Activated CD8-positive, alpha-beta T cell treated with anti-CD3 and anti-CD28 coated beads, Interleukin-2, amount 10 ng/mL, durations not matched to agents 7 days and 5 days (primary cell): ENCODE measurements at regions of chr2 and their contacts with region 1.

Region 1: GRCh38 chr2:27123302-27124231 is at the start of gene ABHD1:
- DNase-seq: peak; percentile 51
- ATAC-seq: peak; percentile 92
- H3K4me3 Mint-ChIP-seq: peak within 1 kb of the TSS; percentile 77
- H3K27ac Mint-ChIP-seq: peak within 1 kb of the TSS; percentile 71
- H3K4me1 Mint-ChIP-seq: peaks cover 14% of the 10 kb centered on the region
- H3K27me3 Mint-ChIP-seq: peaks cover 37% of the 10 kb centered on the region
- total RNA-seq, gene ABHD1: 0.23 to 0.45 TPM

Region 2: GRCh38 chr2:27079233-27080139 is 44.1 kb before region 1 on chr2:
- CTCF ChIA-PET with region 1: no interaction called
- POLR2A ChIA-PET with region 1: no interaction called
- DNase-seq: no peak
- ATAC-seq: no peak
- H3K4me3 Mint-ChIP-seq: no peak overlapping the region
- H3K27ac Mint-ChIP-seq: peak overlapping the region; percentile 98
- H3K4me1 Mint-ChIP-seq: peaks cover 61% of the 10 kb centered on the region
- H3K27me3 Mint-ChIP-seq: no peaks in the 10 kb centered on the region

Region 3: DNA sequence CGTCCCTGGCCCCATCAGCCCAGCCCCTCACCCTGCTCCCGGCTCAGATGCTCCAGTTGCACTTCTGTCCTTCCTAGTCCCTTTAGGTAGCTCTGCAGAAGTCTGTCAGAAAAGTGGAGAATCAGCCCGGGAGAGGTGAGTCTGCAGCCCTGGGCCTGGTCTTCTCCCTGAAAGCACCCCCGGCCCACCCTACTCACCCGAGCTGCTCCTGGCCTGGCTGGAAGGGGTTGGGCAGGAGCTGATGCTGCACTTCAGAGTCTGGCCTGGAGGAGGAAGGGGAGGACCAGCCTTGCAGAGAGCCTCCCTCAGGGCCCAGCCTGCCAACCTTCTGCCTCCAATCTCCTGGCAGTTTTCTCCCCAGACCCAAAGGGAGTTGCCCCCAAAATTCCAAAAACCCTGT is 21.2 kb before region 1 on chr2:
- CTCF ChIA-PET with region 1: no interaction called
- POLR2A ChIA-PET with region 1: no interaction called
- DNase-seq: no peak
- ATAC-seq: no peak
- H3K4me3 Mint-ChIP-seq: no peak overlapping the region
- H3K27ac Mint-ChIP-seq: no peak overlapping the region
- H3K4me1 Mint-ChIP-seq: no peaks in the 10 kb centered on the region
- H3K27me3 Mint-ChIP-seq: peaks cover 7% of the 10 kb centered on the region

Region 4: DNA sequence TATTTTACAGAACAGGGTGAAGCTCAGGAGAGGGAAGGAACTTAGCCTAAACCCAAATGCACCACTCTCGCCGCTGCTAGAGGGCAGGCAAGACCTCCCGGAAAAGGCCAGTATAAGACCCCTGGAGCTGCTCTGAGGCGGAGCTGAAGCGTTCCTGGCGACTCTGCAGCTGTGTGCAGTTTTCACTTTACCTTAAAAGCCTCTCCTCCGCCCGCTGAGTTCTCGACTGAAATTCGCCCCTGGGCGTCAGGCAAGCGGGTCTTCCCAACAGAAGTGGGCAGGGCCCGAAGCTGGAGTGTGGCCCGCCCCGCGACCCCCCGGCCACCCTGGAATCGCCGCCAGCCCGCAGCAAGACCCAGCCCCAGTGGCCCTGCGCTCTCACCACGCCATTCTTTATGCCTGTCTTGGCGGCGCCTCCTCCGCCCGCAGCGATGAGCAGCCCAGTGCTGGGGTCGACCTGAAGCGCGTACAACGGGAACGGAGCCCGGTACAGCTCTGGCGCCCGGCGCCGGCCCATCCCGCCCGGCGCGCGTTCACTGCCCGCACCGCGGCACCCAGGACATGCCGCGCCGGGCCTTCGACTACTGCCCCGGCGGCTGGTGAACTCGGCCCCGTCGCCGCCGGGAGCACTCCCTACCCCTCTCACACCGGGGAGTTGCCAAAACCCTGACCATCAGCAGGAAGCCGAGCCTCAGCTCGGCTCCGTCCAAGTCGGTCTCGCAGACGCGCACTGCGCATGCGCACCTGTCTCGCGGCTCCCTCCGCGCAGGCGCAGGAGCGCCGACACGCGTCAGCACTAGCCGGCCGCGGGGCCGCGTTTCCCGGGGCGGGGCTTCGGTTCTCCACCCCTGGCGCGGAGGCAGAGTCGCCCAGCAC is 10.6 kb after region 1 on chr2 and contains the start of gene PREB:
- CTCF ChIA-PET with region 1: interaction called, 26 read pairs
- POLR2A ChIA-PET with region 1: interaction called, 31 read pairs
- DNase-seq: peak; percentile 98
- ATAC-seq: peak; percentile 96
- H3K4me3 Mint-ChIP-seq: peak within 1 kb of the TSS; percentile 94
- H3K27ac Mint-ChIP-seq: peak within 1 kb of the TSS; percentile 97
- H3K4me1 Mint-ChIP-seq: peaks cover 29% of the 10 kb centered on the region
- H3K27me3 Mint-ChIP-seq: no peaks in the 10 kb centered on the region
- total RNA-seq, gene PREB: 66.5 to 72.1 TPM

Region 5: DNA sequence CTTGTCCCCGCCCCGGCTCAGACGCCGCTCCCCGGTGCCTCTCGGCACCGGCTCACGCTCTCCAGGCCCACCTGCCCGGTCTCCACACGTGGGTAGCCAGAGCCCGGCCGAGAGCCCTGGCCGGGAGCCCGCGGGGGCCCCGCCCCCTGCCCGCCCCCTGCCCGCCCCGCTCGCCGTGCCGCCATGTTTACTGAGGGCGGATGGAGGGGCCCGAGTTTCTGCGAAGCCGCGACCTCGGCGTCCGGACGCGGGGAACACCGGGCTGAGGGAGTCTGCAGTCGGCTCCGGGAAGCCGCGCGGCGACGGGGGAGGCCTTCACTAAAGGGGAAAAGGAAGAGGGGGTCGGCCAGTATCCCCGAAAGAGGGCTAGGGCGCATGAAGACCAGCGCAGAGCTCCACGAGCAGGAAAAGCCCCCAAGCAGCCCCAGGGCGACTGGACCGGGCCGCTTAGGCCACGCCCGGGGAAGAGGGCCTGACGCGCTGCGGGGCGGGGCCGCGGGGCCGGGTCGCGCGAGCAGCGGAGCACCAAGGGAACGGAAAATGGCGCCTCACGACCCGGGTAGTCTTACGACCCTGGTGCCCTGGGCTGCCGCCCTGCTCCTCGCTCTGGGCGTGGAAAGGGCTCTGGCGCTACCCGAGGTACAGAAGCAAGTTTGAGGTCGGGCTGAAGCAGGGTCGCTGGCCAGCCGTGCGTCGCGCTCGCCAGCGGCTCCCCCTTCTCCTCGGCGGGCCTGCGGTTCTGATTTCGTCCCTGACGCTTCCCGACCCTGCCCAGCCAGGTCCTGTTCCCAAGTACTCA is 88.5 kb after region 1 on chr2 and contains the starts of genes ATRAID and SLC5A6:
- CTCF ChIA-PET with region 1: no interaction called
- POLR2A ChIA-PET with region 1: no interaction called
- DNase-seq: peak; percentile 91
- ATAC-seq: peak; percentile 92
- H3K4me3 Mint-ChIP-seq: peak within 1 kb of the TSS; percentile 98
- H3K27ac Mint-ChIP-seq: peak within 1 kb of the TSS; percentile 99
- H3K4me1 Mint-ChIP-seq: peaks cover 49% of the 10 kb centered on the region
- H3K27me3 Mint-ChIP-seq: no peaks in the 10 kb centered on the region
- total RNA-seq, gene ATRAID: 60.2 to 64.7 TPM
- total RNA-seq, gene SLC5A6: 41.5 to 47.4 TPM